HEK293T (cell line): ENCODE measurements at regions of chr2 and their contacts with region 1.

Region 1: DNA sequence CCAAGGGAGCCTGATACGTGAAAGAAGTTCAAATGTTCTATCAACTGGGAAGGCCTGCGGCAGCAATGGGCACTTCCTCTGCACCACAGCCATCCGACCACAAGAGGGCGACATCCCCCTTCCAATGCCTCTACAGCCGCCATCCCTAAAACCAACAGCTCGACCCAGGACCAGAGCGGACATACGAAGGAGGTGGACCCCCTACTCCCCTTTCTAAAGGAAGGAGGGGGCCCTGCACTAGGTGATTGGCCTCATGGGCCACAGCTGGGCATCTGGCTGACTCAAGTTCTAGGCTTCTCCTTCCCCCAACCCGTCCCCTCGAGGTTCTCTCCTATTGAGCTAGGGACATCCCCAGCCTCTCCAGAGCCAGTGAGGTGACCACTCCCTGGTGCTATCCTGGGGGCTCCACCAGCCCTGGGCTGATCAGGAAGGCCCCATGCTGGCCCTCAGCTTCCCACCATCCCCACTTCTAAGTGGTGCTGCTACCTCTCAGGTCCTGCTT is 217.2 kb downstream of the TNS1 start:
- DNase-seq: peak; percentile 88

Region 2: DNA sequence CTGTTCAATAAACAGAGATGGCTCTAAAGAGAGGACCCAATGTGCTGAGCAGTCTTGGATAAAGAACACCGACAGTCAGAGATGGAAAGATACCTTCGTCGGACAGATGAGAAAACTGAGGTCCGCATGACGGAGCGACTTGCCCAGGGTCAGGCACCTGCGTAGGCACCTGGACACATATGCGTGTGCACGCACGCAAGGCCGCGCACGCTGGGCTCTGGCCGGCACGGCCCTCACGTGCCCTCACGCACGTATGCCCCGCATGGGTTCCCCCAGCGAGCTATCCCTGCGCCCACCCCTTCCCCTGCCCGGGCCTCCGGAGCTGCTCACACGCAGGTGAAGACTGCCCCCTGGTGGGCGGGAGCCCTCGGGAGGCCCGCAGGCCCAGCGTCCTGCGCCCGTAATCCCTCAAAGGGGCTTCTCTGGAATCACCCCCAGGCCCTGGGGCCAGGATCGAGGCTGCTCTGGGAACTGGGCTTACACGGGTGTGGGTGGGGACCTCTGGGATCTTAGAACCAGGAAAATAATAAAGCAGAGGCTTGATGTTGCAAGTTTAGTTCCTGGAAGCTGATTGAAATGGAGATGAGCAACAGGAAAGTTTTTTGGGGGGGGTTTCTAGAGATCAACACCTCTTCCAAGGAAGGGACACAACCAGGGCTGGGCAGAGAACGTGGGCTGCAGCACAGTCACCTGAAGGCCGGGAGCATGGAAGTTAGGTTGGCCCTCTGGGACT is 29.1 kb before region 1 on chr2:
- CTCF ChIA-PET with region 1: no interaction called
- POLR2A ChIA-PET with region 1: no interaction called
- DNase-seq: peak; percentile 89

Region 3: DNA sequence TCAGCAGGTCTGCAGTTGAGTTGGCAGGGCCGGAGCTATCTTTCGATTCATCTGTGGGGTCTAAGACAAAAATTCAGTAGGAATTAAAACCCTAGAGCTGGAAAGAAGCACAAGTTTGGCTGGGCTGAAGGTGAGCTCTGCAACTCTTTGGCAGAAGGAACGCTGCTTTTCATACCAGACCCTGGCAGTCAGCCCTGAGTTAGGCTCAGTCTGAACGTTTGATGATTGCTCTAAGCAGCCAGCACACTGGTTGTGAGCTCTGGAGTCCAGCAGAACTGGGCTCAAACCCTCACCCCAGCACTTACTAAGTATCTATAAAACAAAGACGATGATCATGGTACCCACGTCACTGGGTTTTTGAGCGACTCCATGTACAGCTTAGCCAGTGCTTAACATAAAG is 24.7 kb after region 1 on chr2:
- CTCF ChIA-PET with region 1: no interaction called
- POLR2A ChIA-PET with region 1: no interaction called
- DNase-seq: no peak

Region 4: GRCh38 chr2:217886720-217887309 is 101.2 kb after region 1 on chr2:
- CTCF ChIA-PET with region 1: interaction called, 17 read pairs
- POLR2A ChIA-PET with region 1: no interaction called
- DNase-seq: peak; percentile 80

Region 5: GRCh38 chr2:217988840-217989204 is 203.2 kb after region 1 on chr2:
- CTCF ChIA-PET with region 1: interaction called, 10 read pairs
- POLR2A ChIA-PET with region 1: no interaction called
- DNase-seq: no peak

Region 6: DNA sequence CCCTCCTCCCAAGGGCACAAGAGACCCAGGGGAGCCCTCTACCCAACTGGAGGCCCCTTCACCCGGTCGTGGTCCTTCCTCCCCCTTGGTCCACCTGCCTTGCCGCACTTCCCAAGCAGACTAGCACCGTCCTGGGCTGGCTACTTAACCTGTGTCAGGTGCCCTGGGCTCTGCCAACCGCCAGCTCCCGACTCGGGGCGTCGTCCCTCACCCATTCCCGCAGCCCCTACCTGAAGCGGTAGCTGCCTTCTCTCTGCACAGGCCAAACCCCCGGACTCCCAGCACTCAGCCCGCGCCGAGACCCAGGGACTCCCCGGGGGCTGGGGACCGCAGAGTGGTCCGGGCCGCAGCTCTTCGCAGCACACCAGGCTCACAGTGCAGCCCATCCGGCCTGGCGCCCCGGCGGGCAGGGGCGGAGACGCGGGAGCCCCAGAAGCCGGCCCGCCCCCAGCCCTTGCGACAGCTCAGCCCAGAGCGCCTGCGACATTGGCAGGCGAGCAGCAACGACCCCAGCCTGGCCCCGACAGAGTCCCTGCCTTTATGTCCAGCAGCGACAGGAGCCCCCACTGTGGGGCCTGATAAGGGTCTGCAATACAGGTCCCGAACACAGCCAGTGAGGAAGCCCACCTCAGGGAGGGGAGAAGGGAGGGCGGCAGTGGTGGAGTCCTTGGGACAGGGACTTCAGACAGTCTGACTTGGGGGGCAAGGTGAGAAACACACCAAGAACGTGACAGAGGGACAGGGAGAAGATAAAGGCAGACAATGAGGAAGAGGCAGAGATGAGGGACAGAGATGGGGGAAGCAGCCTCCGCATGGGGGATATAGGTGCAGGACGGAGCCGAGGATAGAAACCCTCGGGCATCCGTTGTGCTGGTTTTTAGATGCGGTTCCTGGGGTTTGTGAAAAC is 248.2 kb after region 1 on chr2:
- CTCF ChIA-PET with region 1: interaction called, 12 read pairs
- POLR2A ChIA-PET with region 1: no interaction called
- DNase-seq: no peak

Region 7: DNA sequence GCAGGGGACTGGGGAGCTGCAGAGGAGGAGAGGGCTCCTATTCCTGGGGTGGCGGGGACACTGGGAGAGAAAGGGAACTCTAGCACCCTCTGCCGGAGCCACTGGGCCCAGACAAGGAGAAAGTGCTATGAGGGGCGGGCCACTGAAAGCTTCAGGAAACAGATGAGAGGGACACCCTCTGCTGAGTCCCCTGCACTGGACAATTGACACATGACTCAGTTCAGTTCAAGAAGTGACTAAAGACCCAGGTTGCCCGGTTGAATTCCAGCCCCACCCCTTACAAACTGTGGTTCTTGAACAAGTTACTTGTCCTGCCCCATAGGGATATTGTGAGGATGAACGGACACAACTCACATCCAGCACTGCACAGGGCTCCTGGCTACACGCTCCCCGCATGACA is 288.4 kb after region 1 on chr2:
- CTCF ChIA-PET with region 1: interaction called, 12 read pairs
- POLR2A ChIA-PET with region 1: no interaction called
- DNase-seq: peak; percentile 62